ENCODE measurements at regions of chr2 and their contacts with region 1.

Region 1: DNA sequence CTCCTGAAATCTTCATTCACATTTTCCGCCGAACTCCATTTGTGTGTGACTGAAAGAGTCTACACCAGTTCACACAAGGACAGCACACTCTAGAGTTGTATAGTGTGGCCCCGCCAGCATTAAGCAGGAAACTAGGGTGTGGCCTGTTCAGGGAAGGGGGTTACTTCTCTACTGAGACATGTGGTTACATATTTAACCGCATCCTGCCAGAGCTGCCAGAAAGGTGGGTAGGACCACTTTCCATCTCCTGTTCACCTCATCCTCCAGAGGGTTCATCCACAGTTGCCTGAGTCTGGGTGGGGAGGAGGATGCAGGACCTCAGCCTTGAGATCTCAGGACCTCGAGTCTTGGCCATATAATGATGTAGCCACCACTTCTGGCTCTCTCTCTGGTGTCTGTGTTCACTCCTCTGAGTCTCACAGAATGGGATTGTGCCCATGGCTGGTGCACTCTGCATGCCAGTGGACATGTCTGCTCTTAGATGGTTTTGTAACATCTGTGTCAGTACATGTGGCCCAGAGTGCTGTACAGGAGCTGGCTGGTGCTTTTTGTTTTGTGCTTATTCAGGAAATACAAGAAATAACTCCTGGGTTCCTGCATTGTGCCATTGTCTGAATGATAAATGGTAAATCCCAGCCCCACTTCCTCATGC is 7.7 kb upstream of the SP140L start:
- DNase-seq: peak in 8 of 9 donors; percentile 56 to 94 (median 90)
- ATAC-seq: peak; percentile 96
- H3K4me3 ChIP-seq: peak overlapping the region; percentile 34
- H3K4me3 Mint-ChIP-seq: peak overlapping the region; percentile 54 to 85 (median 77)
- H3K27ac ChIP-seq: peak overlapping the region; percentile 72
- H3K27ac Mint-ChIP-seq: peak overlapping the region; percentile 85 to 96 (median 91)
- H3K4me1 ChIP-seq: peaks cover 49 to 63% of the 10 kb centered on the region in 2 donors
- H3K4me1 Mint-ChIP-seq: peaks cover 47 to 89% (median 83%) of the 10 kb centered on the region in 7 donors
- H3K27me3 ChIP-seq: no peaks in the 10 kb centered on the region
- H3K27me3 Mint-ChIP-seq: no peaks in the 10 kb centered on the region

Region 2: DNA sequence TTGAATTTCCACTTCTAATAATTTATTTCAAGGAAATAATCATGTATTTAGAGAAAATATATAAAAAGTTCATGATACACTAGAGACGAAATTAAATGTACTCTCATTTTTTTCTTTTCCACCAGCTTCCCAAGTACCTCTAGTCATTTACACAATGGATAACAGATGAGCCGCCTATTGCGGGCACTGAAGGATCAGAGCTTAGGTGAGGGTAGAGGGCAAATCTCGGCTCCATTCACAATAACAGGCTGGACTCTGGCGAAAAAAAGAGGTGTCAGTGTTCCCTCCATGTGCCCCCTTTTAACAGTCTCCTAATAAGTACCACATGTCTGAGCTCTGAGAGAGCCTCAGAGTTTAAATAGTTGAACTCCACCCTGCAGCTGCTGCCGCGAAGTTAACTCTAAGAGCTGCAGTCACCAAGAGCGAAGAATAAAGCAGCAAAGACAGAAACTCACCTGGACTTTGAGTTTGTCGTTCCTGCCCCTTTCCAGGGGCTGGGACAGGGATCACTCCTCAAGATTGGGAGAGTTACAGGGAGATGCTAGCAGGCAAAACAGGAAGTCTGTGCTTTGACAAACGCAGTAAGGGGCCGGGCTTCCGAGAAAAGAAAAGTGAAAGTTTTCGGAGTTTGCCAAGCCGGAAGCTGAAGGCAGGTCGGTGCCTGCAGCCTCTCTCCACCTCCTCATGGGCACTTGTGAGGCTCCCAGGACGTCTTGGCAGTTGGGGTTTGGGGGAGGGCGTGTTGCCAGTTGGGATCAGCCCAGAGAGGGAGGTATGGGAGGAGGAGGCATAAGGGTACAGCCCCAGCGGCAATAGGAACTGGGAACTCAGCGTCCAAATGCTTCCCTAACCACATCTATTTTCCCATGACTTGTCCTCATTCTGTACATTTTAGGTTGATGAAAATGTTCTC is 99.7 kb before region 1 on chr2 and contains the start of gene SP110:
- CTCF ChIA-PET with region 1: no interaction called
- POLR2A ChIA-PET with region 1: interaction called, 17 read pairs
- intact Hi-C with region 1: loop called (anchors 1 kb)
- DNase-seq: peak; percentile 38 to 84 (median 81)
- ATAC-seq: peak; percentile 93
- H3K4me3 ChIP-seq: peak within 1 kb of the TSS; percentile 95
- H3K4me3 Mint-ChIP-seq: peak within 1 kb of the TSS; percentile 89 to 100 (median 99)
- H3K27ac ChIP-seq: peak within 1 kb of the TSS; percentile 83
- H3K27ac Mint-ChIP-seq: peak within 1 kb of the TSS; percentile 94 to 100 (median 99)
- H3K4me1 ChIP-seq: peaks cover 22 to 36% of the 10 kb centered on the region in 2 donors
- H3K4me1 Mint-ChIP-seq: peaks cover 44 to 75% (median 67%) of the 10 kb centered on the region in 7 donors
- H3K27me3 ChIP-seq: no peaks in the 10 kb centered on the region
- H3K27me3 Mint-ChIP-seq: no peaks in the 10 kb centered on the region
- total RNA-seq, gene SP110: 97.5 to 182 (median 117) TPM

Region 3: GRCh38 chr2:230254152-230254881 is 65.0 kb before region 1 on chr2:
- CTCF ChIA-PET with region 1: no interaction called
- POLR2A ChIA-PET with region 1: no interaction called
- intact Hi-C with region 1: loop called in 1 of 2 experiments (anchors 2 kb)
- DNase-seq: peak in 8 of 9 donors; percentile 28 to 70 (median 51)
- ATAC-seq: peak; percentile 81
- H3K4me3 ChIP-seq: peak overlapping the region; percentile 5
- H3K4me3 Mint-ChIP-seq: no peak overlapping the region
- H3K27ac ChIP-seq: no peak overlapping the region
- H3K27ac Mint-ChIP-seq: no peak overlapping the region
- H3K4me1 ChIP-seq: peaks cover 18 to 24% of the 10 kb centered on the region in 2 donors
- H3K4me1 Mint-ChIP-seq: peaks cover 0 to 22% (median 9%) of the 10 kb centered on the region in 7 donors
- H3K27me3 ChIP-seq: no peaks in the 10 kb centered on the region
- H3K27me3 Mint-ChIP-seq: no peaks in the 10 kb centered on the region

Region 4: DNA sequence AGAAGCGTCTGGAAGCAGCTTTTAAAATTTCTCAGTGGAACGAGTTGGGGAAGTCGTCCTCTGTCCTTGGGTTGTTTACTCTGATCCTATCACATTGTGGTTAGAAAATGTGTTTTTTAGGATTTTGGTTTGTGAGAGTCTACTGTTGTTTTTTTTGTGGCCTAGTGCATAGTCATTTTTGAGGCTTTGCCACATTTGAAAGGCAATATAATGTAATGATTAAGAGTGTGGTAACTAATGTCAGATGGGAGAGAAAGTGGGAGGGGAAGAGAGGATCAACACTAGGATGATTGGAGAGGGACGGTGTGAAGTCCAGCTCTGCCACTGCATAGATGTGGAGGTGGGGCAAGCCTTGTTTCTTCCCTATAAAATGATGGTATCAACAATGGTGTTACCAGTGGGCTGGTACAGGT is 16.1 kb after region 1 on chr2:
- CTCF ChIA-PET with region 1: interaction called, 4 read pairs
- POLR2A ChIA-PET with region 1: interaction called, 3 read pairs
- intact Hi-C with region 1: loop called in 1 of 2 experiments (anchors 1 kb)
- DNase-seq: no peak
- ATAC-seq: peak; percentile 20
- H3K4me3 ChIP-seq: peak overlapping the region; percentile 28
- H3K4me3 Mint-ChIP-seq: peak overlapping the region; percentile 71 to 92 (median 78)
- H3K27ac ChIP-seq: peak overlapping the region; percentile 66
- H3K27ac Mint-ChIP-seq: peak overlapping the region; percentile 83 to 95 (median 89)
- H3K4me1 ChIP-seq: peaks cover 0 to 41% of the 10 kb centered on the region in 2 donors
- H3K4me1 Mint-ChIP-seq: peaks cover 48 to 74% (median 63%) of the 10 kb centered on the region in 7 donors
- H3K27me3 ChIP-seq: no peaks in the 10 kb centered on the region
- H3K27me3 Mint-ChIP-seq: no peaks in the 10 kb centered on the region

Region 5: DNA sequence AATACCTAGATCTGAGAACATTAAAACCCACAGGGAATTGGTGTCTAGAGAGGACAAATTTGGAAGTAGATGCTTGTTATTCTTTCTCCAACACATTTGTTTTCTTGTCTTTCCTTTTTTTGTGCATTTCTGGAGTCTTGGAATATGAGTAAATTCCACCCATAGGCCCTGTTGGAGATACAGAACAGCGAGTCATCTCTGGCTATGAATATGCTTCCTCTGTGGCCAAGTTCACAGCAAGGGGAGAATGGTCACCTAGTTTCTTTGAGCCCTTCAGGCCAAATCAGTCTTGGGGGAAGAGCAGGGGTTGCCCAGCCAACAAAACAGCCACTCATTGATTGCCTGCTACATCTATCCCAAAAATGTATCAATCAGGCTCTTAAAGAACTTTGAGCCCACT is 39.0 kb after region 1 on chr2:
- CTCF ChIA-PET with region 1: no interaction called
- POLR2A ChIA-PET with region 1: interaction called, 10 read pairs
- intact Hi-C with region 1: no loop called
- DNase-seq: no peak
- ATAC-seq: no peak
- H3K4me3 ChIP-seq: no peak overlapping the region
- H3K4me3 Mint-ChIP-seq: no peak overlapping the region
- H3K27ac ChIP-seq: no peak overlapping the region
- H3K27ac Mint-ChIP-seq: peak overlapping the region in 2 of 9 donors; percentile 47 to 65
- H3K4me1 ChIP-seq: peaks cover 15 to 16% of the 10 kb centered on the region in 2 donors
- H3K4me1 Mint-ChIP-seq: peaks cover 32 to 63% (median 41%) of the 10 kb centered on the region in 7 donors
- H3K27me3 ChIP-seq: no peaks in the 10 kb centered on the region
- H3K27me3 Mint-ChIP-seq: no peaks in the 10 kb centered on the region

Region 6: GRCh38 chr2:230712443-230713330 is 393.4 kb after region 1 on chr2 and contains the start of gene CAB39:
- CTCF ChIA-PET with region 1: no interaction called
- POLR2A ChIA-PET with region 1: no interaction called
- intact Hi-C with region 1: loop called in 1 of 2 experiments (anchors 2 kb)
- DNase-seq: peak; percentile 82 to 94 (median 90)
- ATAC-seq: peak; percentile 96
- H3K4me3 ChIP-seq: peak within 1 kb of the TSS; percentile 92
- H3K4me3 Mint-ChIP-seq: peak within 1 kb of the TSS; percentile 91 to 99 (median 98)
- H3K27ac ChIP-seq: peak within 1 kb of the TSS; percentile 91
- H3K27ac Mint-ChIP-seq: peak within 1 kb of the TSS; percentile 92 to 98 (median 97)
- H3K4me1 ChIP-seq: peaks cover 27 to 35% of the 10 kb centered on the region in 2 donors
- H3K4me1 Mint-ChIP-seq: peaks cover 31 to 53% (median 50%) of the 10 kb centered on the region in 7 donors
- H3K27me3 ChIP-seq: no peaks in the 10 kb centered on the region
- H3K27me3 Mint-ChIP-seq: no peaks in the 10 kb centered on the region
- total RNA-seq, gene CAB39: 71.0 to 186 (median 95.4) TPM

Region 7: DNA sequence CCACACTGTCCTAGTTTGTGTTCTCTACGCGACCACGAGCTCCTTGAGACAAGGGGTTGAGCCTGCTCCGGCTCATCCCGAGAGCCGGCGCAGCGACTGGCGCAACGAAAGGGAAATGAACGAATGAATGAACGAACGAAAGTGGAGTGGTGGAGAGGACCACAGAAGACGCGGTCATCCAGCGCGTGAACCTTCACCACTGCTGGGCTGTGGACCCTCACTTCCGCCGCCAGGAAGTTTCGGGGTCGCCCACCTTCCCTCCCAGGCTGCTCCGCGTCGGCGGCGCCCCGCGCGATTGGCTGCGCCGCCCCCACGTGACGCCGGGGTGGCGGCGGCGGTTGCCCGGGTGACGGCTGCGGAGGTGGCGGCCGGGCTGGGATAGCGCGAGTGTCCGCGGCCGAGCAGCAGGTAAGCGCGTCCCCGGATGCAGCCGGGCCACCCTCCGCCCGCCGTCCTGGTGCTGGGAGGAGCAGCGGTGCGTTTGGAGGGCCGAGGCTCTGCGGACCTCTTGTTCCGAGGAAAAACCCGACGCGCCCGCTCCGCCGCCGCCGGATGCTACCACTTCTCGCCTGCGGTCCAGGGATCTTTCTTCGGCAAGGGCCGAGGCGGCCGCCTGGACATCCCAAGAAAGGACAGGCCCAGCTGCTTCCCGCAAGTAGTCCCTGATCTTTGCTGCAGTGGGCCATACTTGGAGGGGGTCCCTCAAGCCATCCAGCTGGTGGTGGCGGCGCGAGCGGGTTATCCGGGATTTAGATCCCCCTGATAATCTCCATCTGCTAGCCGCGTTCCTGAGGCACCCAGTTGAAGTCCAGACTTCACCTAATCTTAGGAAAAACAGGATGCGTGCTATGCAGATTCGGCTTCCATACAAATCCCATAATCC is 879.2 kb after region 1 on chr2 and contains the start of gene ARMC9:
- CTCF ChIA-PET with region 1: no interaction called
- POLR2A ChIA-PET with region 1: no interaction called
- intact Hi-C with region 1: no loop called
- DNase-seq: peak; percentile 45 to 89 (median 63)
- ATAC-seq: peak; percentile 94
- H3K4me3 ChIP-seq: peak within 1 kb of the TSS; percentile 100
- H3K4me3 Mint-ChIP-seq: peak within 1 kb of the TSS; percentile 87 to 97 (median 94)
- H3K27ac ChIP-seq: peak within 1 kb of the TSS; percentile 61
- H3K27ac Mint-ChIP-seq: peak within 1 kb of the TSS in 7 of 9 donors; percentile 21 to 81 (median 62)
- H3K4me1 ChIP-seq: peaks cover 0 to 4% of the 10 kb centered on the region in 2 donors
- H3K4me1 Mint-ChIP-seq: peaks cover 0 to 15% (median 13%) of the 10 kb centered on the region in 7 donors
- H3K27me3 ChIP-seq: no peaks in the 10 kb centered on the region
- H3K27me3 Mint-ChIP-seq: peaks cover 0 to 37% (median 0%) of the 10 kb centered on the region in 5 donors
- total RNA-seq, gene ARMC9: 0.69 to 2.0 (median 0.85) TPM